BJ (cell line): ENCODE measurements at regions of chr15 and their contacts with region 1.

Region 1: DNA sequence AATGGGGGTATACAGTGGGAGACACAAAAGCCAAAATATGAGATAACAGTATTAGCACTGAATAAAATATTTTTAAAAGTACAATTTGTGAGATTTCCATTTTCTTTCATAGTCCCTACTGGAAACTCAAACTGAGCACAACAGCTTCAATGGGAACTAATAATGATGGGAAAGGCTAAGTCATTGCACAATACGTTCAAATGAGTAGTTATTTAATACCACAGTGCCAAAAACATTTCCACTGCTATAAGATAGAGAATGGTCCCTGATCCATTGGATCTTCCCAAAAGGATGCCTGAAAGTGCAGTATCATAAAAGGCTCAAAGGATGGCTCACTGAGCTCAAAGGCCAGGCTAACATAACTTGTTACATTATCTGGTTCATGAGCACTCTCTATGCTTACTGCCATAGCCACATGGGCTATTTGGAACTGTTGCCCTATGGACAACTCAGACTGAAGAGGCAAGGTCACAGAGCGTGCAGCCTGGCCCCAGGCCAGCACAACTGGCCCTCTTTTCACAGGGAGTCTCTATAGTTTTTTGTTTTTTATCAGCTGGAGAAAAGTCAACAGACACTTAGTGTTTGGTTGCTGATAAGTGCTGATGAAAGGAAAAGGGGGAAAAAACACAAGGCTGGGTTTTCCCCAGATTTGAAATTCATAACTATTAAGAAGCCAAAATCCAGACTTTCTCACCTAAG is 54.1 kb upstream of the PPIB start:
- DNase-seq: no peak
- H3K4me3 ChIP-seq: no peak overlapping the region
- H3K27me3 ChIP-seq: no peaks in the 10 kb centered on the region
- CTCF ChIP-seq: no peak

Region 2: DNA sequence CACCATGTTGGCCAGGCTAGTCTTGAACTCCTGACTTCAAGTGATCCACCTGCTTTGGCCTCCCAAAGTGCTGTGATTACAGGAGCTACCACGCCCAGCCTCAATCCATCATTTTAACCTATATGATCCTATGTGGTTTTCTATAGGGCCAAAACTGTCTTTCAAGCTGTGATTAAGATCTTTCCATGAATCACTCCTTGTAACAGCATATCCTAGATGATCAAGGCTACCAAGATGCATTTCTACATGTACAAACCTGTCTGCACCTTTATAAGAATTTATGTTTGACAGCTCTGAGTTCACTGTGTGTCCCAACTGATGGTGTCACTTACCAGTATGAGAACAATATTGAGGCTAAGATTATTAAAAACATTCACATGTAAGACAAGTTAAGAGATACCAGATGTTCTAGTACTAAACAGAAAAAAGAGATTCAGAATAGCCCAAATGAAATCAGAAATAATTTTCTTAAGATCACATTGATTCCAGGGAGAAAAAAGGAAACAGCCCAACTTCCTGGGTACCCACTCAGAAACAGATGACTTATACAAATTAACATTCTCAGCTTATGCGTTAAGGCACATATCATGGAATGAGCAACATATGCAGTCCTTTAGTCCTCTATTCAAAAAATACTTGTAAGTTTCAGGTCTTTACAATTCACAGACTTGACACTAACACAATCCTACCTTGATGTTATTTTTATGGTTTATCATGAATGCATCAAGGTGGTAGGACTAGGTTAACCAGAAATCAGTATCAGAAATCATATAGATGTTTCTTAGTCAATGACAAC is 29.3 kb before region 1 on chr15:
- CTCF ChIA-PET with region 1: no interaction called
- POLR2A ChIA-PET with region 1: no interaction called
- DNase-seq: no peak
- H3K4me3 ChIP-seq: no peak overlapping the region
- H3K27me3 ChIP-seq: no peaks in the 10 kb centered on the region
- CTCF ChIP-seq: no peak

Region 3: GRCh38 chr15:64611085-64611725 is 394.3 kb after region 1 on chr15:
- CTCF ChIA-PET with region 1: no interaction called
- POLR2A ChIA-PET with region 1: interaction called, 10 read pairs
- DNase-seq: no peak
- H3K4me3 ChIP-seq: no peak overlapping the region
- H3K27me3 ChIP-seq: no peaks in the 10 kb centered on the region
- CTCF ChIP-seq: no peak